Sigmoid colon (tissue), 7 donors: ENCODE measurements at regions of chr2 and their contacts with region 1.

Region 1: GRCh38 chr2:96960153-96960961 is 26.0 kb downstream of the FAM178B start:
- DNase-seq: peak; percentile 95
- H3K4me3 ChIP-seq: no peak overlapping the region
- H3K27ac ChIP-seq: no peak overlapping the region
- H3K4me1 ChIP-seq: peaks cover 0 to 15% (median 7%) of the 10 kb centered on the region in 4 donors
- H3K27me3 ChIP-seq: no peaks in the 10 kb centered on the region
- CTCF ChIP-seq: peak; percentile 91 to 96 (median 94)
- EP300 ChIP-seq: no peak
- POLR2A ChIP-seq: no peak

Region 2: DNA sequence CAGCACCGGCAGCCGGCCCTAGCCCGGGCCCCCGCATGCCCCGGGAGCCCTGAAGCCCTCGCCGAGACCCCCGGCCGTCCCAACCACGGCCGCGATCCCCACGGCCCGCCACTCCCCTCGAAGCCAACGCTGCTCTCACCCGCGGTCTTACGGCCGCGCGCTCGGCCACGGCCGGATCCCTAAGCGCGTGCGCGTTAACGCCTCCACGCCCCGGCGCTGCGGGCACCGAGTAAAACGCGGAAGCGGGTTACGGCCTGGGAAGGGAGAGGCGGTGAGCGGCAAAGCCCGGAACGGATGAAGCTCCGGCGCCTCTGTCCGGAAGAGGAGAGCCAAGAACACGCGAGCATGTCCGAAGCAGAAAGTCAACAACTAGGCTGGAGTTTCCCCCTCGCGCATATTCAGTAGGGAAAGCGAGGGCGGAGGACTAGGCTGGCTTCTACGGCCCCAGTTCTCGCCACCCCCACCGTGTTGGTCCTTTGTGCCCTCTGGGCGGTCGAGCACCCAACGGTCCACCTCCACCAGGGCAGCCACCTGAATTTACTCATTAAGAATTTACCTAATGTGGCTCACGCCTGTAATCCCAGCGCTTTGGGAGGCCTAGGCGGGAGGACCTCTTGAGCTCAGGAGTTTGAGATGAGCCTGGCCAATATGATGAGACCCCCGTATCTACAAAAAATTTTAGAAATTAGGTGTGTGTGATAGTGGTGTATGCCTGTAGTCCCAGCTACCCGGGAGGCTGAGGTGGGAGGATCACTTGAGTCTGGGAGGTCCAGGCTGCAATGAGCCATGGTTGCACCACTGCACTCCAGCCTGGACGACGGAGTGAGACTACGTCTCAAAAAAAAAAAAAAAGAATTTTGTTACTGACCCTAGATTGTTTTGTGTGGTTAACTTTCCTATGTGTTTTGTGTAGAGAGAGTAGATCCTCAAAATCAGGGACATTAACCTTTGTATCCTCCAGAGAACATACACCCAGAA is 321.9 kb before region 1 on chr2 and contains the start of gene KANSL3:
- intact Hi-C with region 1: loop called (anchors 5 kb)
- DNase-seq: peak; percentile 96
- H3K4me3 ChIP-seq: peak within 1 kb of the TSS; percentile 65 to 76 (median 72)
- H3K27ac ChIP-seq: peak within 1 kb of the TSS; percentile 92 to 98 (median 92)
- H3K4me1 ChIP-seq: peaks cover 3 to 38% (median 29%) of the 10 kb centered on the region in 4 donors
- H3K27me3 ChIP-seq: no peaks in the 10 kb centered on the region
- CTCF ChIP-seq: no peak
- EP300 ChIP-seq: peak in 1 of 4 donors; percentile 63
- POLR2A ChIP-seq: peak; percentile 76 to 85
- total RNA-seq, gene KANSL3: 35.4 to 55.0 (median 47.7) TPM

Region 3: GRCh38 chr2:96824079-96824870 is 136.1 kb before region 1 on chr2:
- intact Hi-C with region 1: no loop called
- DNase-seq: no peak
- H3K4me3 ChIP-seq: no peak overlapping the region
- H3K27ac ChIP-seq: peak overlapping the region; percentile 54 to 64 (median 58)
- H3K4me1 ChIP-seq: peaks cover 0 to 61% (median 51%) of the 10 kb centered on the region in 4 donors
- H3K27me3 ChIP-seq: no peaks in the 10 kb centered on the region
- CTCF ChIP-seq: no peak
- EP300 ChIP-seq: no peak
- POLR2A ChIP-seq: no peak

Region 4: DNA sequence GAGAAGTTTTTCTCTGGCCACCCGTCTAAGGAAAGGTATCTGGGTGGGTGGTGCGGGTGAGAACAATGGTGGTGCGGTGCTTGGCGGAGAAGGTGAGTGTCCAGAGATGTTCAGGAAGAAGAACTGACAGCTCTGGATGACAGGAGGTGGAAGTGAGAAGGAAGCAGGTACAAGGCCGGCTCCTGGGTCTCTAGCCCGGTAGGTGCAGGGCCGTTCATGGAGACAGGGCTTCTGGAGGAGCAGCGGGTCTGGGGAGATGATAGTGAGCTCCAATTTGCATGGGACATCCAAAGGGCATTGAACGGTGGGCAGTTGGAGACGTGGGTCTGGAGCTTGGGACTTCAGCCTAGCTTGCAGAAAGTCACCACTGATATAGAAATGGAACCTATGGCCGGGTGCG is 135.3 kb after region 1 on chr2:
- intact Hi-C with region 1: loop called (anchors 10 kb)
- DNase-seq: no peak
- H3K4me3 ChIP-seq: peak overlapping the region in 1 of 4 donors; percentile 49
- H3K27ac ChIP-seq: peak overlapping the region; percentile 71 to 78 (median 72)
- H3K4me1 ChIP-seq: peaks cover 0 to 9% (median 7%) of the 10 kb centered on the region in 4 donors
- H3K27me3 ChIP-seq: no peaks in the 10 kb centered on the region
- CTCF ChIP-seq: no peak
- EP300 ChIP-seq: no peak
- POLR2A ChIP-seq: no peak